PC-3 (cell line): ENCODE measurements at regions of chr5 and their contacts with region 1.

Region 1: DNA sequence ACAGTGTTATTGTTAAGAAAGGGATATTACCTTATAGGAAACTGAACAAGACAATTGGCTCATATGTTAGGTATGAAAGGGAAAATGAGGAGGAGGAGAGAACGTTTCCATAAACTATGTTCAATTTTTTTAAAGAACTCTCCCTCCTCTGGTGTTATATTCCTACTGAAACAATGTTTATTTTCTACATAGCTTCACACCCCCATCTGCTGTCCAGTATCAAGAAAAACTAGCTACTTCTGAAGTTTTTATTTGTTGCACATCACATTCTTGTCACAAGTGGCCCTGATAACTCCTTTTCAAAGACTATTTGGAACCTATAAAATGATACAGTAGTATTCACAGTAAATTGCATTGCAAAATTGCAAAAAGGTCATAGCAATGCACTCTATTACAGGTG is 223.4 kb upstream of the FAM174A start:
- DNase-seq: peak; percentile 29
- ATAC-seq: peak; percentile 81
- H3K4me3 ChIP-seq: no peak overlapping the region
- H3K27ac ChIP-seq: no peak overlapping the region
- H3K4me1 ChIP-seq: no peaks in the 10 kb centered on the region
- H3K27me3 ChIP-seq: no peaks in the 10 kb centered on the region
- CTCF ChIP-seq: peak; percentile 41

Region 2: GRCh38 chr5:99104538-99105132 is 1207.2 kb before region 1 on chr5:
- CTCF ChIA-PET with region 1: interaction called, 7 read pairs
- POLR2A ChIA-PET with region 1: no interaction called
- intact Hi-C with region 1: loop called (anchors 1 kb)
- DNase-seq: peak; percentile 65
- ATAC-seq: peak; percentile 38; the same call in 1 of the 2 replicates
- H3K4me3 ChIP-seq: no peak overlapping the region
- H3K27ac ChIP-seq: no peak overlapping the region
- H3K4me1 ChIP-seq: no peaks in the 10 kb centered on the region
- H3K27me3 ChIP-seq: peaks cover 31% of the 10 kb centered on the region
- CTCF ChIP-seq: peak; percentile 69; the same call in 1 of the 2 replicates

Region 3: DNA sequence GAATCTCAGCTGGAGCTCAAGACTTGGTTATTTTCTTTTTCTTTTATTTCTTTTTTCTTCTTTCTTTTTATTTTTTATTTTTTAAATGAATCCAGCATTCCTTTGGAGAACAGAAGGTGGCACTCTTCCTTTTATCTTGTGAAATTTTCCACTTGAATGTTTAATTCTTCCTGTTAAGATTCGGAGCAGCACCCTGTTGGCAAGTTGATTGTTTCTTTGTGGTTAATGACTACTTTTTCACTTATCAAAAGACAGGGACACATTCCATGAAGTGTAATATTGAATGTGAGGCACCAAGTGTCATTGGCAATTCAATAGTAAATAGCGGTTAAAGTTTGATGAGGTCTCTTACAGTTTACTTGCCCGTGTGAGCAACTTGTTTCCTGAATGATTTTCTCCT is 1142.5 kb before region 1 on chr5:
- CTCF ChIA-PET with region 1: no interaction called
- POLR2A ChIA-PET with region 1: no interaction called
- intact Hi-C with region 1: loop called (anchors 2 kb)
- DNase-seq: peak; percentile 47
- ATAC-seq: peak; percentile 54
- H3K4me3 ChIP-seq: no peak overlapping the region
- H3K27ac ChIP-seq: no peak overlapping the region
- H3K4me1 ChIP-seq: no peaks in the 10 kb centered on the region
- H3K27me3 ChIP-seq: peaks cover 11% of the 10 kb centered on the region; the same call in 1 of the 2 replicates
- CTCF ChIP-seq: peak; percentile 67

Region 4: DNA sequence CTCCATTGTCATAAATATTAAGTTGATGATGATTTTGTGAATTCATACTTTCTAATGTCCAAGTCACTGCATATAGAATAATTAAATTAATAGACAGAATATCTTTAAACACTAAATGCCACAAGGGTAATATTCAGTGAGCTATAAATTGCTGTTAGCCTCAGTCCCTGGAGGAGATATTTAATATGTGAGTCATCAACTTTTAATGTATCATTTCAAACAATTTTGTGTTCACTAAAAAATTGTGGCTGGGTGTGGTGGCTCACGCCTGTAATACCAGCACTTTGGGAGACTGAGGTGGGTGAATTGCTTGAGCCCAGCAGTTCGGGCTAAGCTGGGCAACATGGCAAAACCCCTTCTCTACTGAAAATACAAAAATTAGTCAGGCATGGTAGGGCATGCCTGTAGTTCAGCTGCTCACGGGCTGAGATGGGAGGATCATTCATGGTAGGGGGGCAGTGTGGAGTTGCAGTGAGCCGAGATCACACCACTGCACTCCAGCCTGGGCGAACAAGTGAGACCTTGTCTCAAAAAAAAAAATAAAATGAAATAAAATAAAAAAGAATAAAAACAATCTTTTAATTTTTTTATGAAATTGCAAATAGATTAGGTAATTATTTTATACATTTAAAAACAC is 665.7 kb before region 1 on chr5:
- CTCF ChIA-PET with region 1: no interaction called
- POLR2A ChIA-PET with region 1: no interaction called
- intact Hi-C with region 1: loop called (anchors 5 kb)
- DNase-seq: peak; percentile 74
- ATAC-seq: peak; percentile 77
- H3K4me3 ChIP-seq: peak overlapping the region; percentile 6; the same call in 1 of the 2 replicates
- H3K27ac ChIP-seq: peak overlapping the region; percentile 66
- H3K4me1 ChIP-seq: peaks cover 25% of the 10 kb centered on the region
- H3K27me3 ChIP-seq: no peaks in the 10 kb centered on the region
- CTCF ChIP-seq: no peak; the same call in 1 of the 2 replicates

Region 5: DNA sequence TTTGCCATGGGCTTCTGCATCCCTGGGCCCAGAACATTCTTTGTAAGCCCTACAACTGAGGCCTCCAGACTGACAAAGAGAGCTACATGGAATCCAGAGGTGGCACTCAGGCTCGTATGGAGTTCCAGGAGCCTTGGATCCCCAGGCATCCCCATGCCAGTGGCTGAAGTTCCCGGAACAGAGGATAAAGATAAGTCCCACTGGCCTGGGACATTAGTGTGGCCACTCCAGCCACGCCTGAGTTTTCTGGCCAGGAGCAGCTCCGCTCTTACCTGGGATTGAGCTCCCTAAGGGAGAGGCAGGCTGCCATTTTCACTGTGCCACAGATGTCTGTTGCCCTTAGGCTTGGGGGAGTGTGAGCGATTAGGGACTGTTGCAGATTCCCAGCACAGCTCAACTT is 433.0 kb before region 1 on chr5:
- CTCF ChIA-PET with region 1: no interaction called
- POLR2A ChIA-PET with region 1: no interaction called
- intact Hi-C with region 1: loop called (anchors 1 kb)
- DNase-seq: no peak
- ATAC-seq: no peak
- H3K4me3 ChIP-seq: no peak overlapping the region
- H3K27ac ChIP-seq: no peak overlapping the region
- H3K4me1 ChIP-seq: no peaks in the 10 kb centered on the region
- H3K27me3 ChIP-seq: no peaks in the 10 kb centered on the region
- CTCF ChIP-seq: no peak

Region 6: GRCh38 chr5:100004968-100005367 is 306.8 kb before region 1 on chr5:
- CTCF ChIA-PET with region 1: no interaction called
- POLR2A ChIA-PET with region 1: no interaction called
- intact Hi-C with region 1: loop called (anchors 10 kb)
- DNase-seq: peak; percentile 93
- ATAC-seq: peak; percentile 100
- H3K4me3 ChIP-seq: no peak overlapping the region
- H3K27ac ChIP-seq: 0 out of 2 replicates have a peak overlapping the region, but pooled peaks have one; percentile 8
- H3K4me1 ChIP-seq: peaks cover 9% of the 10 kb centered on the region
- H3K27me3 ChIP-seq: no peaks in the 10 kb centered on the region
- CTCF ChIP-seq: no peak